ENCODE measurements at regions of chr14 and their contacts with region 1.

Region 1: GRCh38 chr14:39988939-39989338 is 556.7 kb upstream of the FBXO33 start:
- DNase-seq: no peak
- H3K4me3 Mint-ChIP-seq: no peak overlapping the region
- H3K27ac Mint-ChIP-seq: no peak overlapping the region
- H3K4me1 Mint-ChIP-seq: no peaks in the 10 kb centered on the region
- H3K27me3 Mint-ChIP-seq: no peaks in the 10 kb centered on the region

Region 2: DNA sequence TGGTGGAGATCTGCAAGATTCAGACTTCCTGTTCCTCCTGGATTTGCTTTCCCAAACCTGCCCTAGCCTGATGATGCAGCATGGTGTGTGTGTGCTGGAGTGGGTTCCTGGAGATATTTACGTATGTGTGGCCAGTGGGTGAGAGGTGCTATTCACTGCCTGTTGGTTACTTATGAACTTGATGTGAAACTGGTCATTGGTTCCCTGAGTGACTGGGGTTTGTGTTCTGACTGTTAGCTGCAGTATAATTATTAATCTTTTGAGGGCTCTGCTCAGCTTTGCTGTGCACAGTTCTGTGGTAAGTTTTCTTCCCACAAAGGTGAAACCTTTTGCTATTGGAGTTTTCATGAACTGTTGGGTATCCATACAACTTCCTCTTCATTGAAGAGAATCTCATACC is 14.9 kb before region 1 on chr14:
- CTCF ChIA-PET with region 1: no interaction called
- POLR2A ChIA-PET with region 1: no interaction called
- DNase-seq: no peak
- H3K4me3 Mint-ChIP-seq: no peak overlapping the region
- H3K27ac Mint-ChIP-seq: no peak overlapping the region
- H3K4me1 Mint-ChIP-seq: no peaks in the 10 kb centered on the region
- H3K27me3 Mint-ChIP-seq: no peaks in the 10 kb centered on the region

Region 3: GRCh38 chr14:40003773-40004172 is 14.8 kb after region 1 on chr14:
- CTCF ChIA-PET with region 1: no interaction called
- POLR2A ChIA-PET with region 1: no interaction called
- DNase-seq: no peak
- H3K4me3 Mint-ChIP-seq: no peak overlapping the region
- H3K27ac Mint-ChIP-seq: no peak overlapping the region
- H3K4me1 Mint-ChIP-seq: no peaks in the 10 kb centered on the region
- H3K27me3 Mint-ChIP-seq: no peaks in the 10 kb centered on the region

Region 4: GRCh38 chr14:40188006-40188405 is 199.1 kb after region 1 on chr14:
- CTCF ChIA-PET with region 1: no interaction called
- POLR2A ChIA-PET with region 1: no interaction called
- DNase-seq: no peak
- H3K4me3 Mint-ChIP-seq: no peak overlapping the region
- H3K27ac Mint-ChIP-seq: no peak overlapping the region
- H3K4me1 Mint-ChIP-seq: no peaks in the 10 kb centered on the region
- H3K27me3 Mint-ChIP-seq: no peaks in the 10 kb centered on the region

Region 5: GRCh38 chr14:40806471-40806870 is 817.5 kb after region 1 on chr14:
- CTCF ChIA-PET with region 1: no interaction called
- POLR2A ChIA-PET with region 1: interaction called, 10 read pairs
- DNase-seq: no peak
- H3K4me3 Mint-ChIP-seq: no peak overlapping the region
- H3K27ac Mint-ChIP-seq: no peak overlapping the region
- H3K4me1 Mint-ChIP-seq: no peaks in the 10 kb centered on the region
- H3K27me3 Mint-ChIP-seq: no peaks in the 10 kb centered on the region

Measured in activated CD4-positive, alpha-beta T cell treated with anti-CD3 and anti-CD28 coated beads, Interleukin-2, amount 10 ng/mL, durations not matched to agents 7 days and 5 days (primary cell).